BJ (cell line): ENCODE measurements at regions of chr2 and their contacts with region 1.

Region 1: DNA sequence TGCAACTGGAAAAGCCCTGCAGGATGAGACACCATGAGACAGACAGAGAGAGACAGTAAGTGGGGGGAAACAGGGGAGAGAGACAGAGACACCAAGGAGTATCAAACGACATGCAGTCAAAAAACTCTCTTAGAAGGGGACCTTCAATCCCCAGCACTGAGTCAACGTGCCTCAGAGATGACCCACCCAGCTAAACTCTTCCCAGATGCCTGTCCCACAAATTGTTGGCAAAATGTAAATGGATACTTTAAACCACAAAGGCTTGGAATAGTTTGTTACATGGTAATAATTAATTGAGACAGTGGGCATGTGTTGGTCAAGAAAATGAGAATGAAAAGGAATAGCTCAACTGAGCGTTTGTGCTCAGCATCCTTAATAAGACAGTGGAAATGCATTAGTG is 98.3 kb downstream of the GRB14 start:
- DNase-seq: peak; percentile 44
- H3K4me3 ChIP-seq: no peak overlapping the region
- H3K27me3 ChIP-seq: no peaks in the 10 kb centered on the region
- CTCF ChIP-seq: no peak

Region 2: DNA sequence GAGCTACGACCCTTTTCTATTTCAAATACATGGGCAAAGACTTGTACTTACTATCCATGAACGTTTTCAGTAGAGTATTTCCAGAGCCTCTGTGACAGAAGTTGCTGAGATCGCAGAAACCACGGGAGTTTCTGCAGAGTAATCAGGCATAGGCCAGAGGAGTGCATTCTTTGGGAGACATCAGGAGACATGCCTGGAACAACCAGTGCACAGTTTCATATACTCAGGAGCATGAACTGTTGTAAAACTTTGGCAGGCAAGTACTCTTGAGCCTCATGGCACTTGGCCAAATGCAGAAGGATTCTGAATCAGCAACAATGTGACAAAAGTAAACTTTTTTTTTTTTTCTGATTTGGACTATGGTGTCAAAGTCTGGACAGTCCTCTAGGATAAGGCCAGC is 208.9 kb before region 1 on chr2:
- CTCF ChIA-PET with region 1: no interaction called
- POLR2A ChIA-PET with region 1: no interaction called
- DNase-seq: no peak
- H3K4me3 ChIP-seq: no peak overlapping the region
- H3K27me3 ChIP-seq: no peaks in the 10 kb centered on the region
- CTCF ChIP-seq: no peak

Region 3: DNA sequence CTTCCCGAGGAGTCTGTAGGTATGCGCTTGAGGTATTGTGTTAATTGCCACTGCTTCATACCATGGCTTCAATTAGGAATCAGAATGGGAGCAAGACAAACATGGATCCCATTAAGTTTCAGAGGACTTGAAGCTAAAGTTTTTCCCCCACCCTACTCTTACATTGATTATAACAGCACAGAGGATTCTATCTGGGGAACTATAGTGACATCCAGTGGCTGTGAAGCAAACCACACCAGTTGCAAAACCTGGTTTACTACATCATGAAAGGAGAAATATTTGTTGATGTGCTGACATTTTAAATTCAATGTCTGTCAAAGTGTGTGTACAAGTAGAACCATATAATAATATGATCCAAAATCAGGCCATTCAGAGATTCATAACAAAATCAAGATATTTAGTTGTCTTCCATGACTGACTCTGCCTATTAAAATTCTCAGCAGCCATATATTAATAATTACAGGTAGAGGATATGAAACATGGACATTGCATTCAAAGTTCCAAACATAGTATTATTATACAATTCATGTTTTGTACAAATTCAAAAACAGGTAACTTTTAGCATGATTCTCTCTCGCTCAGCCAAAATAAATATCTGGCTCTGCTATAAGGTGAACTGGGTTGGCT is 15.3 kb after region 1 on chr2:
- CTCF ChIA-PET with region 1: interaction called, 13 read pairs
- POLR2A ChIA-PET with region 1: no interaction called
- DNase-seq: no peak
- H3K4me3 ChIP-seq: no peak overlapping the region
- H3K27me3 ChIP-seq: peaks cover 3% of the 10 kb centered on the region; the same call in 1 of the 2 replicates
- CTCF ChIP-seq: peak; percentile 76